Ascending aorta (tissue), 2 donors: ENCODE measurements at regions of chr17 and their contacts with region 1.

Region 1: DNA sequence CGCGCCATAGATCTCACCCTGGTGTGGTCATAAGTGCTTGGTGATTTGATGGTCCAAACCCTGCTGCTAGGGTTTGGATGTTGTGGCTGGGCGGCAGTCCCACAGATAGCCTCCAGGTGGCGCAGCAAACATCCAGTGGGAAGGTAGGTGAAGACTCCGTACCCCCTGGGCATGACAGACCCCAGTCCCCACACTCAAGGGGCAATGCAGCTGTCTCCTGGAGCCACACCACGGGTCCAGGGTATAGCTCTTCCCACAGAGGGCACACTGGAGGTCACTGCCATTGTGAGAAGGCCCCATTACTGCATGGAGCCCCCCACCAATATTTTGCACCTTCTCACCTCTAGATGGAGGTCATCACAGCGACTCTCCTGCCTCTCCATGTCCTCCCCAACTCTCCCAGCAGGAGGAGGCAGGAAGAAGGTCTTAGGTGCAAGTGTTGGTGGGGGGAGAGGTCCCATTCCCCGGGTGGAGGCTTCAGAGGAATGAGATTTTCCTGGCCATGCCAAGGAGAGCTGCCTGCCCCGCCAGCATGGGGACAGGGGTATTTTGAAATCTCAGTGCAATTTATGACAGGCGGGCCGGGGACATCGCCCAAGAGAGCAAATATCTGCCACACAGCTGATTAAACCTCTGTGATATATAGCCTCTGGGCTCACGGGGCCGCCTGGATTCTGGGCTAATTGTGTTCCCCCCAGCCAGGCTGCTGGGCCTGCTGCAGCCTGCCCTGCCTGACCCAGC is 17.1 kb upstream of the C17orf113 start:
- DNase-seq: peak in 1 of 2 donors; percentile 73
- H3K4me3 ChIP-seq: no peak overlapping the region
- H3K27ac ChIP-seq: no peak overlapping the region
- H3K4me1 ChIP-seq: peaks cover 0 to 3% of the 10 kb centered on the region in 2 donors
- H3K27me3 ChIP-seq: no peaks in the 10 kb centered on the region
- CTCF ChIP-seq: peak; percentile 68 to 86 (median 84)

Region 2: GRCh38 chr17:42027961-42028790 is 39.3 kb before region 1 on chr17:
- intact Hi-C with region 1: no loop called
- DNase-seq: no peak
- H3K4me3 ChIP-seq: no peak overlapping the region
- H3K27ac ChIP-seq: no peak overlapping the region
- H3K4me1 ChIP-seq: peaks cover 0 to 11% of the 10 kb centered on the region in 2 donors
- H3K27me3 ChIP-seq: no peaks in the 10 kb centered on the region
- CTCF ChIP-seq: no peak

Region 3: DNA sequence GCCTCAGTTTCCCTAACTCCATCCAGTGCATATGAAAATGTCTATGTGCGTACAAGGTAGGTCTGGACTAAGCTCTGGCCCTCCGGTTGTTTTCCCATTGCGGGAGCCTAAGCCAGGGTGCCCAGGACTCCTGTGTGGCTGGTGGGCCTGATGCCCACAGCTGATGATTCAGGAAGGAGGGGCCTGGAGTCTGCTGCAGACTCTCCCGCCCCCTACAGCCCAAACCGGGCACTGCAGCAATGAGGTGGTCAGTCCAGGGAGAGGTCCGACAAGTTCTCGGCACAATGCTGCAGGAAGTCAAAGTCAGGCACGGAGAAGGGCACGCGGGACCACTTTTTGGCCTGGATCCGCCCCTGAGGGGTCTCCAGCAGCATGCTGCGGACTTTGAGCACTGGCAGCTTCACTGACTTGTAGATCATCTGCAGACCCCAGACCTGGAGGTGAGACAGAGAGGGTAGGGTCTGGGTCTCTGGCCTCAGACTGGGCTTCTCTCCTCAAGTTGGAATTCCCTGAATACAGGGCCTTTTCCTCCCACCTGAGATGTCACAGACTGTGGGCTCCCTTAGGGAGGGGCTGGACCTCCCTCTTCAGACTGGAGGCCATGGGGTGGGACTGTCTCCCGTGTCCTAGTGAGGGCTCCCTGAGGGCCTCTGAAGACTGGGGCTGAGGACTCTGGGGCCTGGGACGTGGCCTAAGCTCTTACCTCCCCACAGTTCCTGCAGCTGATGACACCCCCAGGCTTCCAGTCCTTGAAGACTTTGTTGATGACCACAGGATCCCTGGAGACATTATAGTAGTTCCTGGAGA is 34.2 kb after region 1 on chr17:
- intact Hi-C with region 1: loop called (anchors 1 kb)
- DNase-seq: peak in 1 of 2 donors; percentile 87
- H3K4me3 ChIP-seq: no peak overlapping the region
- H3K27ac ChIP-seq: no peak overlapping the region
- H3K4me1 ChIP-seq: peaks cover 3 to 4% of the 10 kb centered on the region in 2 donors
- H3K27me3 ChIP-seq: peaks cover 11% of the 10 kb centered on the region
- CTCF ChIP-seq: peak; percentile 70 to 82 (median 75)